ENCODE measurements at regions of chr6 and their contacts with region 1.

Region 1: GRCh38 chr6:144095331-144096002 is at the start of gene SF3B5:
- DNase-seq: peak; percentile 96
- H3K4me3 Mint-ChIP-seq: peak within 1 kb of the TSS; percentile 96
- H3K27ac Mint-ChIP-seq: peak within 1 kb of the TSS; percentile 98
- H3K4me1 Mint-ChIP-seq: peaks cover 39% of the 10 kb centered on the region
- H3K27me3 Mint-ChIP-seq: no peaks in the 10 kb centered on the region
- total RNA-seq, gene SF3B5: 204 and 232 TPM in 2 replicates

Region 2: GRCh38 chr6:143450453-143451371 is 644.8 kb before region 1 on chr6 and contains the starts of genes ADAT2 and PEX3:
- intact Hi-C with region 1: loop called (anchors 1 kb)
- DNase-seq: peak; percentile 92
- H3K4me3 Mint-ChIP-seq: peak within 1 kb of the TSS; percentile 98
- H3K27ac Mint-ChIP-seq: peak within 1 kb of the TSS; percentile 99
- H3K4me1 Mint-ChIP-seq: peaks cover 50% of the 10 kb centered on the region
- H3K27me3 Mint-ChIP-seq: no peaks in the 10 kb centered on the region
- total RNA-seq, gene ADAT2: 39.0 and 43.6 TPM in 2 replicates
- total RNA-seq, gene PEX3: 23.6 and 25.0 TPM in 2 replicates

Region 3: GRCh38 chr6:143940011-143940597 is 155.4 kb before region 1 on chr6:
- intact Hi-C with region 1: loop called (anchors 1 kb)
- DNase-seq: peak; percentile 26
- H3K4me3 Mint-ChIP-seq: no peak overlapping the region
- H3K27ac Mint-ChIP-seq: no peak overlapping the region
- H3K4me1 Mint-ChIP-seq: peaks cover 9% of the 10 kb centered on the region
- H3K27me3 Mint-ChIP-seq: peaks cover 3% of the 10 kb centered on the region

Region 4: DNA sequence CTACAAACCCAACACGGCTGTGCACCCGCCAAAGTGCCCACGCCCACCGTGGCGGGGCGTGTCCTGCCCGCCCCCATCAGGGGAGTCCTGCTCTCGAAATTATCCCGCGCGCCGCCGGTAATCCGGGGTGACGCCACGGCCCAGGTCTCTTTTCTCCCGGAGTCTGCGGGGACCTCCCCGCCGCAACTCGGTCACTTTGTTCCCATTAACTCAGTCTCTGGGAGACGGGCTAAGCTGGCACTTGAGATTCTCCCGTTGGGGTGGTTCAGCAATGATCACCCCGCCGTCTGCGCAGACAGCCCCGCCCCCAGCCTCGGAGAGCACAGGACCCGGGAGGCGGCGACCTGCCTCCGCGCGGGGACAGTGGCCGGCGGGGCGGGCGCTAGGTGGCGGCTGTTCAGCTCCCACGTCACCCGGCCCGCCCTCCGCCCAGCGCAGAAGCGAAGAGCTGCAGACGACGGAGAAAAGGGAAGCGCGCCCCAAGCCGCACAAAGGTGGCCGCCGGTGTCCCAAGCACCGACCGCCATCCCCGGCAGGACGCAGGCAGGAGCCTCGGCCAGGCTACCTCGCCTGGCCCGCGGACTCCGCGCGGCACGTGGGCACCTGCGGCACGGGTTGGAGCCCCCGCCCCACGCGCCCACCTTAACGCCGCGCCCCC is 31.6 kb before region 1 on chr6:
- intact Hi-C with region 1: loop called (anchors 1 kb)
- DNase-seq: peak; percentile 89
- H3K4me3 Mint-ChIP-seq: peak overlapping the region; percentile 83
- H3K27ac Mint-ChIP-seq: peak overlapping the region; percentile 82
- H3K4me1 Mint-ChIP-seq: peaks cover 44% of the 10 kb centered on the region
- H3K27me3 Mint-ChIP-seq: no peaks in the 10 kb centered on the region

Region 5: DNA sequence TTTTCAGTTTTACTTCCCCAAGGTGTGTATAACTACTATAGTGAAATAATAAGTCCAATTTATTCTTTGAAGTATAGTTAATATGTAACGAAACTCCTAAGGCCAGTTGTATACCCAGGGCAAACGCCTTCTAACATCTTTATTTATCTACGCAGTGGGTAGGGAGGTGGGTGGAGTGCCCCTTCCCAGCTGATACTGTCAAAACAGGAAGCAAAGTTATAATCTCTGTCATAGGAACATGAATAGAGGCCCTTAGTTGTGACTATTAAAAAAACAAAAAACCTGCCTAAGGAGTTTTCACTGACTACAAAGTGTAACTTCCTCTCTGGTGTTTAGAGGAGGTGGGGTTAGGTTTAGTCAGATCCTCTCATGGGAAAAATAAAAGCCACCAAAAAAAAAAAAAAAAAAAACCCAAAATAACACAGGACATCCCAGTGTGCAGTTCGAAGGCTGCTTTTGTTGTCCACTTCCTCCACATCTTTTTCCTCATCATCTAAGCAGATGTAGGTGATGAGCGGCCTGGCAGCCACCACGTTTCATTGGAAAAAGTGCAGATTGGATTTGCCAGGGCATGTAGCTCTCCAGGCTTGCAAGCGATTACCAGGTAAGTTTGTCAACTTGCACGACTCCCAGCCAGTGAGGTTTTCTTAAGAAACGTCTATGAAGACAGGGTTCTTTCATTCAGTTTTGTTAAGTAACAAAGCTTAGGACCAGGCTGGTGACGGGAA is 248.4 kb after region 1 on chr6:
- intact Hi-C with region 1: loop called (anchors 1 kb)
- DNase-seq: peak; percentile 36
- H3K4me3 Mint-ChIP-seq: peak overlapping the region; percentile 96
- H3K27ac Mint-ChIP-seq: peak overlapping the region; percentile 98
- H3K4me1 Mint-ChIP-seq: peaks cover 65% of the 10 kb centered on the region
- H3K27me3 Mint-ChIP-seq: no peaks in the 10 kb centered on the region

Region 6: GRCh38 chr6:144559865-144560593 is 464.6 kb after region 1 on chr6:
- intact Hi-C with region 1: loop called (anchors 5 kb)
- DNase-seq: peak; percentile 53
- H3K4me3 Mint-ChIP-seq: peak overlapping the region; percentile 61
- H3K27ac Mint-ChIP-seq: peak overlapping the region; percentile 86
- H3K4me1 Mint-ChIP-seq: peaks cover 31% of the 10 kb centered on the region
- H3K27me3 Mint-ChIP-seq: no peaks in the 10 kb centered on the region

Region 7: GRCh38 chr6:145175476-145175875 is 1080.0 kb after region 1 on chr6:
- intact Hi-C with region 1: no loop called
- DNase-seq: no peak
- H3K4me3 Mint-ChIP-seq: no peak overlapping the region
- H3K27ac Mint-ChIP-seq: no peak overlapping the region
- H3K4me1 Mint-ChIP-seq: no peaks in the 10 kb centered on the region
- H3K27me3 Mint-ChIP-seq: no peaks in the 10 kb centered on the region